Activated CD8-positive, alpha-beta memory T cell treated with anti-CD3 and anti-CD28 coated beads, Interleukin-2, amount 10 ng/mL, durations not matched to agents 7 days and 5 days (primary cell): ENCODE measurements at regions of chr1 and their contacts with region 1.

Region 1: GRCh38 chr1:174262349-174263241 is 103.3 kb downstream of the RABGAP1L start:
- DNase-seq: no peak
- ATAC-seq: peak; percentile 51
- H3K4me3 Mint-ChIP-seq: no peak overlapping the region
- H3K27ac Mint-ChIP-seq: no peak overlapping the region
- H3K4me1 Mint-ChIP-seq: no peaks in the 10 kb centered on the region
- H3K27me3 Mint-ChIP-seq: no peaks in the 10 kb centered on the region

Region 2: DNA sequence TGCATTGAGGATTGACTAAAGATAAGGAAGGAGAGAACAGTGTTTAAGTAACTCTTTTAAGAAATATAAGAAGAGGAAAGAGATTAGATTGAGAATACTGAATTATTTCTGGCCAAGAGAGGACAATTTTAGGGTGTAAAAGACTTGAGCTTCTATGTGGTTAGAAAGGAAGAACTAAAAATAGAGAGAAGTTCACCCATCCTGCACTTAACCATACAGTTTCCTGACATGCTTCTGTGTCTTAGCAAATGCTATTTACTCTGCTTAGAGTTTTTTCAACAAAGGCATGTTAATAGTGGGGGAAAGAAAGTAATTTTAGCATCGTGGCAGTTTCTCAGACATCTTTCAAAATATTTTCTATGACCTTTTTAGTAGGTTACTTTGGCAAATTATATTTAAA is 62.3 kb after region 1 on chr1:
- CTCF ChIA-PET with region 1: no interaction called
- DNase-seq: no peak
- ATAC-seq: no peak
- H3K4me3 Mint-ChIP-seq: no peak overlapping the region
- H3K27ac Mint-ChIP-seq: peak overlapping the region; percentile 9
- H3K4me1 Mint-ChIP-seq: peaks cover 15% of the 10 kb centered on the region
- H3K27me3 Mint-ChIP-seq: no peaks in the 10 kb centered on the region

Region 3: DNA sequence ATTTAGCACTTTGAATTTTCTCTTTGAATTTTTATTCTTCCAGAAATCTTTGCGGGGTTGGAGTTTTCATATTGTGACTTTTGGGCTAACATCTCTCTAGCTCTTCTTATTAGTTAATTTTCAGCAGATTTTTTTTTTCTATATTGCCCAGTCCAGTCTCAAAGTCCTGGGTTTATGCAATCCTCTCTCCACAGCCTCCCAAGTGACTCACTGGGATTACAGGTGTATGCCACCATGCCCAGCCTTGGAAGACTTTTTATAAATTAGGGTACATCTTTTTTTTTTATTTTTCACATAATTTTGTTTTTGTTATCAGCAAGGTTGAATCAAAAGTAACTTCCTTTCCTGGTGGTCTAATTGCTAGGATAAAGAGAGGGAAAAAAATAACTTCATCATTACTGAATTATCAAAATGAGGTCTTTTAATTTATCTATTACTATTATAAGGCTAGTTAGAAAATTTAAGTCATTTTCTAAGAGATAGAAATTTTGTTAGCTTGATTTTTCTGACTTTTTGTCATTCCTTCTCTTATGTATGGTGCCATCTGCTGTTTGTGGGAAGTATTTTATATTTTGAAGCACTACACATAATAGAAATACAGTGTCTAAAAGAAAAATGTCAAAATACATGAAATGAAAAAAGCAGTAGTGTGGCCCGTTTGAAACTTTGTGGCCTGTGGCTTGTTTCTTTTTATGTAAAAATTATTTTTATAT is 463.7 kb after region 1 on chr1:
- CTCF ChIA-PET with region 1: interaction called, 40 read pairs
- DNase-seq: no peak
- ATAC-seq: no peak
- H3K4me3 Mint-ChIP-seq: no peak overlapping the region
- H3K27ac Mint-ChIP-seq: no peak overlapping the region
- H3K4me1 Mint-ChIP-seq: no peaks in the 10 kb centered on the region
- H3K27me3 Mint-ChIP-seq: no peaks in the 10 kb centered on the region

Region 4: GRCh38 chr1:174743654-174744561 is 481.3 kb after region 1 on chr1:
- CTCF ChIA-PET with region 1: interaction called, 24 read pairs
- DNase-seq: no peak
- ATAC-seq: no peak
- H3K4me3 Mint-ChIP-seq: no peak overlapping the region
- H3K27ac Mint-ChIP-seq: no peak overlapping the region
- H3K4me1 Mint-ChIP-seq: no peaks in the 10 kb centered on the region
- H3K27me3 Mint-ChIP-seq: no peaks in the 10 kb centered on the region